ENCODE measurements at regions of chr1 and their contacts with region 1.

Region 1: DNA sequence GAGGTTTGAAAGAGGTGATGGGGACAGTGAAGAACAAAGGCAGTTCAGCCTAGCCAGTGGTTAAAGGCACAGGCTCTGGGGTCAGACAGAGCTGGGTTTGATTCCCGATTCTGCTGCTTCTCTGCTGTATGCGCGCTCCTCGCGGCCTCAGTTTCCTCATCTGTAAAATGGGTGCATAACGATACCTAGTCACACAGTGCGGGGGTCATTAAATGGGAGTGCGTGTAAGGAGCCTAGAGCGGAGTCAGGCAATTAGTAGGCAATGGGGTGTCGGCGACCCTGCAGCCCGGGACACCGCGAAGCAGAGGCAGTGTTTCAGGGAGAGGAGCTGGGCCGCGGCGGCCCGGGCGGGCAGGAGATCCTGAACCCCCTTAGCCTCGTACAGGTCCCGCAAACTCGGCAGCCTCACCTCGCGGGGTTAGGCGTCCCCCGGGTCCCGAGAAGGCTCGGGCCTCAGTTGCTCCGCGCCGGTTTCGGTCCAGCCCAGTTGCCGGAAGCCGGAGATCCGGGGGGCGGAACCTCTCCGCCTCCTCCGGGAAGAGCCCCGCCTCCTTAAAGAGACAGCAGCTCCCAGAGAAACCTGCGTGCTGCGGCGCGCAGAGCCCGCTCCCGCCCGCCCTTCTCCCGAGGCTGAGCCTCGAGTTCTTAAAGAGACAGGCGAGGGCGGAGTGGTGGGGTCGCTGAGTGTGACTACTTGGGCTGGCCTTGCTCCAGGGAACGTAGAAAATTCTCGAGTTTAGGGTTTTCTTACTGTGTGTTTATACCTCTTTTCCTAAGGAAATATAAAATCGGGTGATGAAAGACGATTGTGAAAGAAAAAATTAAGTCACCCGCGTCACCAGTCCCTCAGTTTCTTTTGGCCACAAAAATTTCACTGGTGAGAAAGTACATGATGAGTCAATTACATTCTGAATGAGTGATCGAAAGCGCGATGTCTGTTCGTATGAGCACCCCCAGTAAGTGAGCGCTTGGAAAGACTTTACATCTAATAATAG is at the start of gene YIPF1:
- DNase-seq: peak; percentile 90
- ATAC-seq: peak; percentile 99
- H3K4me3 Mint-ChIP-seq: peak within 1 kb of the TSS; percentile 95
- H3K27ac Mint-ChIP-seq: peak within 1 kb of the TSS; percentile 92
- H3K4me1 Mint-ChIP-seq: peaks cover 27% of the 10 kb centered on the region
- H3K27me3 Mint-ChIP-seq: no peaks in the 10 kb centered on the region
- total RNA-seq, gene YIPF1: 14.9 to 16.3 TPM

Region 2: GRCh38 chr1:53821380-53821779 is 68.2 kb before region 1 on chr1:
- CTCF ChIA-PET with region 1: no interaction called
- POLR2A ChIA-PET with region 1: no interaction called
- DNase-seq: no peak
- ATAC-seq: no peak
- H3K4me3 Mint-ChIP-seq: no peak overlapping the region
- H3K27ac Mint-ChIP-seq: no peak overlapping the region
- H3K4me1 Mint-ChIP-seq: peaks cover 4% of the 10 kb centered on the region
- H3K27me3 Mint-ChIP-seq: no peaks in the 10 kb centered on the region

Region 3: DNA sequence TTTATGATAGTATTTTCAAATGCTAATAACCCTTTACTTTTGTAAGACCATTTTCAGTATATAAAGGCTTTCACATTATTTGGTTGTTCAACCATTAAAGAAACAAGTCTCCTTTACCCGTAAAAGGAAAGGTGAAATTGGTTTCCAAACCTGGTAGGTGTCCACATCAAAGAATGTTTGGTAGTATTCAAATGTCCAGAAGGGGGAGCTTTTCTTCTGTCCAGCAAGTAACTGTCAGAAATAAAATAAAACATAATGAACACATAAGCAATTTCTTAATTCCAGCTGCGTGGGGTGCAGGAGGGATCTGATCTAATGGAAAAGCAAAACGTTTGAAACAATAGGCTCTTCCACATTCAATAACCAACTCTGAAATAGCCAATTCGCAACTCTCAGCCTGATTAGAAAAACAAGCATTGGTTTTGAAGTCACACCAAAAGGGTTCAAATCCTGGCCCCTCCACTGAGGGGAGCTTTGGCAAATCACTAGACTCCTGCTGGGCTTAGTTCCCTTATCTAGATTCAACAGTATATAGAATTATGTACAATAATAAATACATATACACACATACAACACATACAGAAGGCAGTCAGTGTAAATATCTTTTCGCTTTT is 11.0 kb before region 1 on chr1:
- CTCF ChIA-PET with region 1: interaction called, 20 read pairs
- POLR2A ChIA-PET with region 1: interaction called, 3 read pairs
- DNase-seq: no peak
- ATAC-seq: no peak
- H3K4me3 Mint-ChIP-seq: no peak overlapping the region
- H3K27ac Mint-ChIP-seq: no peak overlapping the region
- H3K4me1 Mint-ChIP-seq: no peaks in the 10 kb centered on the region
- H3K27me3 Mint-ChIP-seq: no peaks in the 10 kb centered on the region

Region 4: GRCh38 chr1:53899708-53900107 is 10.1 kb after region 1 on chr1:
- CTCF ChIA-PET with region 1: interaction called, 10 read pairs
- POLR2A ChIA-PET with region 1: interaction called, 6 read pairs
- DNase-seq: no peak
- ATAC-seq: no peak
- H3K4me3 Mint-ChIP-seq: no peak overlapping the region
- H3K27ac Mint-ChIP-seq: no peak overlapping the region
- H3K4me1 Mint-ChIP-seq: peaks cover 10% of the 10 kb centered on the region
- H3K27me3 Mint-ChIP-seq: peaks cover 4% of the 10 kb centered on the region

Measured in activated CD8-positive, alpha-beta T cell treated with anti-CD3 and anti-CD28 coated beads, Interleukin-2, amount 10 ng/mL, durations not matched to agents 7 days and 5 days (primary cell).